ENCODE measurements at regions of chr19 and their contacts with region 1.

Region 1: GRCh38 chr19:49896863-49897621 is at the start of gene IL4I1:
- DNase-seq: peak; percentile 54
- H3K4me3 Mint-ChIP-seq: peak within 1 kb of the TSS; percentile 83
- H3K27ac Mint-ChIP-seq: peak within 1 kb of the TSS; percentile 99
- H3K4me1 Mint-ChIP-seq: peaks cover 41% of the 10 kb centered on the region
- H3K27me3 Mint-ChIP-seq: peaks cover 1% of the 10 kb centered on the region
- total RNA-seq, gene IL4I1: 50.0 and 51.5 TPM in 2 replicates

Region 2: DNA sequence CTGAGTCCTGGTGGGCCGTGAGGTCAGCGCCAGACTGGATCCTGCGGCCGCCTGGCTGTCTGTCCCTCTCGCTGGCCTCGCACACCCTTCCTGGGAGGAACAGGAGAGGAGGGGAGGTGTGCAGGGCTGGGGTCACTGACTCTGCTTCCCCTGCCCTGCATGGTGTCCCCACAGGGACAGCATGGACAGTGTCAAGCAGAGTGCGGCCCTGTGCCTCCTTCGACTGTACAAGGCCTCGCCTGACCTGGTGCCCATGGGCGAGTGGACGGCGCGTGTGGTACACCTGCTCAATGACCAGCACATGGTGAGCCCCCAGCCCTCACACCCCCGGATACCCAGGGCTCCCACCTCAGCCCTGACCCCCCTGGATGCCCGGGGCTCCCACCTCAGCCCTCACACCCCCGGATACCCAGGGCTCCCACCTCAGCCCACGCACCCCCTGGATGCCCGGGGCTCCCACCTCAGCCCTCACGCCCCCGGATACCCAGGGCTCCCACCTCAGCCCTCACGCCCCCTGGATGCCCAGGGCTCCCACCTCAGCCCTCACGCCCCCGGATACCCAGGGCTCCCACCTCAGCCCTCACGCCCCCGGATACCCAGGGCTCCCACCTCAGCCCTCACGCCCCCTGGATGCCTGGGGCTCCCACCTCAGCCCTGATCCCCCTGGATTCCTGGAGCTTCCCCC is 105.1 kb before region 1 on chr19:
- intact Hi-C with region 1: no loop called
- DNase-seq: no peak
- H3K4me3 Mint-ChIP-seq: no peak overlapping the region
- H3K27ac Mint-ChIP-seq: no peak overlapping the region
- H3K4me1 Mint-ChIP-seq: peaks cover 5% of the 10 kb centered on the region
- H3K27me3 Mint-ChIP-seq: no peaks in the 10 kb centered on the region

Region 3: GRCh38 chr19:49801966-49802690 is 94.9 kb before region 1 on chr19:
- intact Hi-C with region 1: no loop called
- DNase-seq: no peak
- H3K4me3 Mint-ChIP-seq: no peak overlapping the region
- H3K27ac Mint-ChIP-seq: no peak overlapping the region
- H3K4me1 Mint-ChIP-seq: peaks cover under 1% of the 10 kb centered on the region
- H3K27me3 Mint-ChIP-seq: no peaks in the 10 kb centered on the region

Region 4: GRCh38 chr19:49911381-49912145 is 14.5 kb after region 1 on chr19:
- intact Hi-C with region 1: loop called (anchors 1 kb)
- DNase-seq: no peak
- H3K4me3 Mint-ChIP-seq: peak overlapping the region; percentile 75
- H3K27ac Mint-ChIP-seq: peak overlapping the region; percentile 96
- H3K4me1 Mint-ChIP-seq: peaks cover 63% of the 10 kb centered on the region
- H3K27me3 Mint-ChIP-seq: no peaks in the 10 kb centered on the region

Region 5: GRCh38 chr19:49921871-49922795 is 25.1 kb after region 1 on chr19:
- intact Hi-C with region 1: no loop called
- DNase-seq: no peak
- H3K4me3 Mint-ChIP-seq: no peak overlapping the region
- H3K27ac Mint-ChIP-seq: peak overlapping the region; percentile 63
- H3K4me1 Mint-ChIP-seq: peaks cover 39% of the 10 kb centered on the region
- H3K27me3 Mint-ChIP-seq: no peaks in the 10 kb centered on the region